ENCODE measurements at regions of chr1 and their contacts with region 1.

Region 1: GRCh38 chr1:157496121-157496526 is 56.2 kb downstream of the FCRL5 start:
- DNase-seq: peak in 2 of 10 donors; percentile 19 to 20

Region 2: DNA sequence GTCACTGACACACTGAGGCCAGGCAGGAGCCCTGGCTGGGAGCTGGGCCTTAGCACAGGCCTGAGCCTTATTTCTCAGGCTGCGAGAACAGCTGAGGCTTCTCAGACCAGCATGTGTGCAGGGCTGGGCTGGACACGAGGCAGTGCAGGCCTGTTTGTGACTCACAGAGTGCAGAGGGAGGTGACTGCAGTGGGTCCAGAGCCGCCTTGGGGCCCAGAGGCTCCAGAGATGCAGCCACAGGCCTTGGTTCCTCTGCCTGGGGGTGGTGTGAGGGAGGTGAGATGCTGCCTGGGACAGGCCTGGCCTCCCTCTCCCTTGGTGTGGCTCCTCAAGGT is 296.7 kb before region 1 on chr1:
- intact Hi-C with region 1: loop called (anchors 5 kb)
- DNase-seq: peak in 1 of 10 donors; percentile 35

Measured in posterior cingulate gyrus (tissue), 11 donors.